Colonic mucosa (tissue), 4 donors: ENCODE measurements at regions of chr6 and their contacts with region 1.

Region 1: GRCh38 chr6:165884813-165885765 is 222.0 kb upstream of the PDE10A start:
- DNase-seq: peak; percentile 71
- H3K4me3 ChIP-seq: no peak overlapping the region
- H3K27ac ChIP-seq: no peak overlapping the region
- H3K4me1 ChIP-seq: no peaks in the 10 kb centered on the region
- H3K27me3 ChIP-seq: no peaks in the 10 kb centered on the region
- CTCF ChIP-seq: peak; percentile 83

Region 2: DNA sequence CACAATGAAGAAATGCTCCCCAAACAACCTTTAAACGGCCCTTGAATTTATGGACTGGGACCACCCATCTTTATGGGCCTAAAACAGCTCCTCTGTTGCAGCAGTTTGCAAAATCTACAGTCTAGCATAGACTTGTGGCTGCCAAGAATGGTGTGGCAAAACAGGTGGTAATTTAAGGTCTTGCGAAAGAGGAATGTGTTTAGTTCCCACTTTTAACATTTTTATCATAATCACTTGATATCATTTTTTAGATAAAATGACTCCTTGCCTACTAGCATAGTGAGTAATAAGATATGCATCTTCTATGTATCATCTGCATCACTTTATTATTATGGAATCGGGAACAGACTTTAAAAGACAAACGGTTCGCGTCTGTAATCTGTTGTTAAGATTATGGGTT is 416.3 kb before region 1 on chr6:
- intact Hi-C with region 1: no loop called
- DNase-seq: no peak
- H3K4me3 ChIP-seq: no peak overlapping the region
- H3K27ac ChIP-seq: no peak overlapping the region
- H3K4me1 ChIP-seq: no peaks in the 10 kb centered on the region
- H3K27me3 ChIP-seq: no peaks in the 10 kb centered on the region
- CTCF ChIP-seq: no peak

Region 3: GRCh38 chr6:165939601-165940290 is 54.7 kb after region 1 on chr6:
- intact Hi-C with region 1: no loop called
- DNase-seq: no peak
- H3K4me3 ChIP-seq: no peak overlapping the region
- H3K27ac ChIP-seq: no peak overlapping the region
- H3K4me1 ChIP-seq: no peaks in the 10 kb centered on the region
- H3K27me3 ChIP-seq: no peaks in the 10 kb centered on the region
- CTCF ChIP-seq: no peak

Region 4: GRCh38 chr6:166097915-166098522 is 212.9 kb after region 1 on chr6:
- intact Hi-C with region 1: loop called (anchors 2 kb)
- DNase-seq: peak; percentile 67
- H3K4me3 ChIP-seq: peak overlapping the region; percentile 27
- H3K27ac ChIP-seq: no peak overlapping the region
- H3K4me1 ChIP-seq: no peaks in the 10 kb centered on the region
- H3K27me3 ChIP-seq: no peaks in the 10 kb centered on the region
- CTCF ChIP-seq: peak; percentile 83